ENCODE measurements at regions of chr10 and their contacts with region 1.

Region 1: DNA sequence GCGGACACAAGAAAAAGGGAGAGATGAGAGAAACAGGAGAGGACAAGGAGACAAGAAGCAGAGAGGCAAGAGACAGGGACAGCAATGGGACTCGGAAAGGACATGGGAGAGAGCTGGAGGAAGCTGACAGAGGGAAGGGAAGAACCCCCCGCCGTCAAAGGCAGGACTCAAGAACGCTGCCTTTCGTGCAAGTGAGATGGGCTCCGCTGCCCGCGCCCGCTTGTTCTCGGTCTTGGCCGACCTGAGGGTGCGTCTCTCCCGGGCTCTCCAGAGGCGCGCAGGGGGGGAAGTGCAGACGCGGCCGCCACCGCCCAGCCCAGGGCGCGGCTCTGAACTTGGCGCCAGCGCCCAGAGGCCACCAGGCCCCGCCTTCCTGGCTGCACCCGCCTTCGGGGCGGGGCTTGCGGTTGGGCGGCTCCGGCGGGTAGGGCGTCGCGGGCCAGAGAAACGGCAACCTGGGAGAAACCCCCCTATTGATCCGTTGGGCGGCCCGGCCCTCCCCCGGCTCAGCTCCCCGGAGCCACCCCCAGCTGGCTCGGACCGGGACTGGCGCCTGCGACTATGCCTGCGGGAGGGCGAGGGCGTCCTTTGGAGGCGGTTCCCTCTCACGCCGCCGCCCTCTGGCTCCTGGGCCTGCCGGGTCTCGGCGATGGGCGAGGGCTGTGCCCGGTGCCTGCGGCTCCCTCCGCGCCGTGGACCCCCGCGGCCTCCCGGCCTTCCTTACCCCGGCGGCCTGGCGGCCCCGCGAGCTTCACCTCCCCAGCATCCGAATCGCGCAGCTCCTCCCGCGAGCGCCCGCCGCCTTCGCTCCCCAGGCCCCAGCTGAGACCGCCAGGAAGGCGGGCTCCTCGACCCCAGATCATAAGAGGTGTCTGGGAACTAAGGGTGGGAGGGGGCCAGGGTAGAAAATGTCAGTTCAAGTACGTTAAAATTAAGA is 2.2 kb upstream of the ANTXRL start:
- DNase-seq: peak; percentile 73
- H3K4me3 ChIP-seq: peak overlapping the region; percentile 62 to 75 (median 68)
- H3K27ac ChIP-seq: peak overlapping the region; percentile 40
- H3K4me1 ChIP-seq: peaks cover 26% of the 10 kb centered on the region
- H3K27me3 ChIP-seq: peaks cover 10% of the 10 kb centered on the region
- CTCF ChIP-seq: no peak

Region 2: DNA sequence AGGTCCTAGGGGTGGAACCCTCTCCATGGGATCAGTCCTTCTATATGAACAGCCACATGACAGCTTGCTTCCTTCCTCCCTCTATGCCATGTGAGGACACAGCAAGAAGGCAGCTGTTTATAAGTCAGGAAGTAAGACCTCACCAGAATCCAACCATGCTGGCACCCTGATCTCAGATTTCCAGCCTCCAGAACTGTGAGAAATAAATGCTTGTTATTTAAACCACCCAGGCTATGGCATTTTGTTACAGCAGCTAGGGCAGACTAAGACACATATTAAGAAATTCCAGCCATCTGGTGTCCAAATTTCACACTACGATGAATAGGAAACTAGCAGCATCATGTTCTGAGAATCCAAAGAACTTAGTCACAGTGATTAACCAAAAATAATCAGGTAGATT is 752.1 kb before region 1 on chr10:
- CTCF ChIA-PET with region 1: no interaction called
- dilution Hi-C with region 1: no loop called
- in situ Hi-C with region 1: no loop called
- intact Hi-C with region 1: no loop called
- DNase-seq: peak; percentile 9
- H3K4me3 ChIP-seq: no peak overlapping the region
- H3K27ac ChIP-seq: no peak overlapping the region
- H3K4me1 ChIP-seq: peaks cover 3% of the 10 kb centered on the region
- H3K27me3 ChIP-seq: no peaks in the 10 kb centered on the region
- CTCF ChIP-seq: no peak

Region 3: GRCh38 chr10:46079831-46080575 is 204.6 kb before region 1 on chr10:
- CTCF ChIA-PET with region 1: no interaction called
- dilution Hi-C with region 1: no loop called
- in situ Hi-C with region 1: no loop called
- intact Hi-C with region 1: no loop called
- DNase-seq: no peak
- H3K4me3 ChIP-seq: no peak overlapping the region
- H3K27ac ChIP-seq: no peak overlapping the region
- H3K4me1 ChIP-seq: no peaks in the 10 kb centered on the region
- H3K27me3 ChIP-seq: no peaks in the 10 kb centered on the region
- CTCF ChIP-seq: no peak

Region 4: DNA sequence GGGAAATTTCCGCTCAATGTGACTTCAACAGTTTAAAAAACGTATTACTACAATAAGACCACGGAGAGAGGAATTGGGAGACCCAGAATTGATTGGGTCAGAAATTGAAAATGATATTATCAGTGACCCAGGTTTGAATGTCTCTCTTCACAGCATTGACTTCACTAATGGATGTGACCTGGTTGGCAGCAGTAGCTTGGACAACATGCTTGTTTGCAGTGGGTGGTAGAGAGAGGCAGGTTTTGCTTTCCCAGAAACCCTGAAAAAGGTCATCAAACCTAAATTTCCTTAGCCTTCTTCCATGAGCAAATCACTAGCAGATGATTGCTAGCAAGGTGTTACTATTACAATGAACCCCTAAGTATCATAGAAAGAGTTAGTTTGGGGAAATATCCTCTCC is 87.5 kb before region 1 on chr10:
- CTCF ChIA-PET with region 1: no interaction called
- dilution Hi-C with region 1: no loop called
- in situ Hi-C with region 1: no loop called
- intact Hi-C with region 1: no loop called
- DNase-seq: no peak
- H3K4me3 ChIP-seq: no peak overlapping the region
- H3K27ac ChIP-seq: no peak overlapping the region
- H3K4me1 ChIP-seq: no peaks in the 10 kb centered on the region
- H3K27me3 ChIP-seq: no peaks in the 10 kb centered on the region
- CTCF ChIP-seq: no peak

Region 5: GRCh38 chr10:47384148-47384921 is 1099.8 kb after region 1 on chr10 and contains the start of gene ZNF488:
- CTCF ChIA-PET with region 1: no interaction called
- dilution Hi-C with region 1: loop called (anchors 5 kb)
- in situ Hi-C with region 1: loop called (anchors 5 kb)
- intact Hi-C with region 1: no loop called
- DNase-seq: peak; percentile 85
- H3K4me3 ChIP-seq: peak within 1 kb of the TSS; percentile 81 to 85 (median 82)
- H3K27ac ChIP-seq: peak within 1 kb of the TSS; percentile 66
- H3K4me1 ChIP-seq: peaks cover 18% of the 10 kb centered on the region
- H3K27me3 ChIP-seq: no peaks in the 10 kb centered on the region
- CTCF ChIP-seq: peak in 1 of 2 donors; percentile 10
- total RNA-seq, gene ZNF488: 0.67 to 1.4 TPM